Prostate gland (tissue), 2 donors: ENCODE measurements at regions of chr2 and their contacts with region 1.

Region 1: DNA sequence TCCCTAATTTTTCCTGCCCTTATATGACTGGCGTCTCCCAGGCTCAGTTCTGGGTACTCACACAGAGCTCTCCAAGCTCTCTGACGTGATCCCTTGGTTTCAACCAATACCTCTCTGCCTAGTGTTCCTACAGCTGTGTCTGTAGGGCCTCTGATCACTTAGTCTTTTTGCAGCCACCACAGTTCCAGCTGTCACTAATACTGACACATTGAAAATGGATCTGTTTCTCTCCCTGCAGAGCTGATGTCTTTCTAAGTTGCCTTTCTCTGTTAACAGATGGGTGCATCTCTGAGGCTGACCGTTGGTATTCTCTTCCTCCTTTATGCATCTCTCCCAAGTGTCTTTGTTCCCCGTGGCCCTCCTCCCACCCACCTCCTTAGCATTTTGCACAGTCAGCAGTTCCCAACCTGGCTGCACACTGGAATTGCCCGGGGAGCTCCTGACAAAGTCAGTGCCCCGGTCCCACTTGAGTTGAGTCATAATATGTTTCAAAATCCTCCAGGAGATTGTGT is 62.5 kb downstream of the CERS6 start:
- DNase-seq: no peak
- H3K4me3 ChIP-seq: no peak overlapping the region
- H3K27ac ChIP-seq: no peak overlapping the region
- H3K4me1 ChIP-seq: no peaks in the 10 kb centered on the region
- H3K27me3 ChIP-seq: no peaks in the 10 kb centered on the region
- CTCF ChIP-seq: no peak
- POLR2A ChIP-seq: no peak

Region 2: GRCh38 chr2:168480354-168480753 is 38.3 kb before region 1 on chr2:
- intact Hi-C with region 1: loop called (anchors 5 kb)
- DNase-seq: no peak
- H3K4me3 ChIP-seq: no peak overlapping the region
- H3K27ac ChIP-seq: no peak overlapping the region
- H3K4me1 ChIP-seq: no peaks in the 10 kb centered on the region
- H3K27me3 ChIP-seq: no peaks in the 10 kb centered on the region
- CTCF ChIP-seq: no peak
- POLR2A ChIP-seq: no peak